ENCODE measurements at regions of chr14 and their contacts with region 1.

Region 1: DNA sequence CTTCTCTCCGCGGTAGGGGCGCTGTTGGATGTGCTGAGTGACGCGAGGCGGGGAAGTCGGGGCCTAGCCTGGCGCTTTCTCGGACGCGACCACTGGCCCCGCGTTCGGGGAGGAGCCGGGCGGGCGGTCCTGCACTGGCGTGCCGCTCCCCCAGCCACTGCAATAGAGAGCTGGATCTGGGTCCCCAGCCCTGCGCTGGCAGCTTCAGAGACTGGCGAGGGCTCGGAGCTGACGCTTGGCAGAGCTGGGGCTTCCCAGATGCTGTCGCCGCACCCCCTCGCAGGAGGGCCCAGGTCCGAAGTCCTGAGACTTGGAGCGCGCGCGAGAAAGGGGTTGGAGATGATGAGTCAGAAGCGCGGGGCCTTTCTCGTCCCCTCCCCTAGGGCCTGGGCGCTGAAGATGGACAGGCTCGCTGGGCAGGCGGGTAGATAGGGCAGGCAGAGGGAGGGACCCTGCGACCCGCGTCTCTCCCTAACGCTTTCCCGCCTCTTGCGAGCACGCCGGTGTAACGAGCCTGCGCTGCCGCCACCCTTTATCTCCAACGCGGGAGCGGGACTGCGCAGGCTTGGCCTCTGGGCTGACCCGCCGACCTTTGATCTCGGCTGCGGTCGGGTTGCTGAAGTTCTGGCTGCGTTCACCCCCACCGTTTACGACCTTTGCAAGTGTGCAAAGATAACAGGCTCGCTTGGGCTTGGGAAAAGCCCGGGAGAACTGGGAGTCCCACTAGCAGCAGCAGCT is 3.0 kb downstream of the TMEM253 start:
- DNase-seq: peak; percentile 97
- ATAC-seq: peak; percentile 86
- H3K4me3 ChIP-seq: peak overlapping the region; percentile 72 to 92 (median 84)
- H3K4me3 Mint-ChIP-seq: peak overlapping the region; percentile 78
- H3K27ac ChIP-seq: peak overlapping the region; percentile 93 to 96
- H3K27ac Mint-ChIP-seq: peak overlapping the region; percentile 96
- H3K4me1 ChIP-seq: peaks cover 17 to 25% of the 10 kb centered on the region in 2 donors
- H3K4me1 Mint-ChIP-seq: peaks cover 15% of the 10 kb centered on the region
- H3K27me3 ChIP-seq: peaks cover 0 to 25% (median 15%) of the 10 kb centered on the region in 4 experiments
- H3K27me3 Mint-ChIP-seq: peaks cover 26% of the 10 kb centered on the region
- CTCF ChIP-seq: peak; percentile 76

Region 2: GRCh38 chr14:21024585-21025370 is 79.1 kb before region 1 on chr14 and contains the start of gene NDRG2:
- CTCF ChIA-PET with region 1: interaction called, 348 read pairs
- POLR2A ChIA-PET with region 1: no interaction called
- intact Hi-C with region 1: loop called (anchors 2 kb)
- DNase-seq: peak; percentile 83
- ATAC-seq: peak; percentile 94
- H3K4me3 ChIP-seq: peak within 1 kb of the TSS; percentile 15 to 86 (median 75)
- H3K4me3 Mint-ChIP-seq: peak within 1 kb of the TSS; percentile 93
- H3K27ac ChIP-seq: no peak within 1 kb of the TSS
- H3K27ac Mint-ChIP-seq: peak within 1 kb of the TSS; percentile 67
- H3K4me1 ChIP-seq: peaks cover 12 to 23% of the 10 kb centered on the region in 2 donors
- H3K4me1 Mint-ChIP-seq: peaks cover 19% of the 10 kb centered on the region
- H3K27me3 ChIP-seq: peaks cover 0 to 30% (median 8%) of the 10 kb centered on the region in 4 experiments
- H3K27me3 Mint-ChIP-seq: peaks cover 16% of the 10 kb centered on the region
- CTCF ChIP-seq: no peak
- total RNA-seq, gene NDRG2: 9.5 and 10.2 TPM in 2 replicates

Region 3: DNA sequence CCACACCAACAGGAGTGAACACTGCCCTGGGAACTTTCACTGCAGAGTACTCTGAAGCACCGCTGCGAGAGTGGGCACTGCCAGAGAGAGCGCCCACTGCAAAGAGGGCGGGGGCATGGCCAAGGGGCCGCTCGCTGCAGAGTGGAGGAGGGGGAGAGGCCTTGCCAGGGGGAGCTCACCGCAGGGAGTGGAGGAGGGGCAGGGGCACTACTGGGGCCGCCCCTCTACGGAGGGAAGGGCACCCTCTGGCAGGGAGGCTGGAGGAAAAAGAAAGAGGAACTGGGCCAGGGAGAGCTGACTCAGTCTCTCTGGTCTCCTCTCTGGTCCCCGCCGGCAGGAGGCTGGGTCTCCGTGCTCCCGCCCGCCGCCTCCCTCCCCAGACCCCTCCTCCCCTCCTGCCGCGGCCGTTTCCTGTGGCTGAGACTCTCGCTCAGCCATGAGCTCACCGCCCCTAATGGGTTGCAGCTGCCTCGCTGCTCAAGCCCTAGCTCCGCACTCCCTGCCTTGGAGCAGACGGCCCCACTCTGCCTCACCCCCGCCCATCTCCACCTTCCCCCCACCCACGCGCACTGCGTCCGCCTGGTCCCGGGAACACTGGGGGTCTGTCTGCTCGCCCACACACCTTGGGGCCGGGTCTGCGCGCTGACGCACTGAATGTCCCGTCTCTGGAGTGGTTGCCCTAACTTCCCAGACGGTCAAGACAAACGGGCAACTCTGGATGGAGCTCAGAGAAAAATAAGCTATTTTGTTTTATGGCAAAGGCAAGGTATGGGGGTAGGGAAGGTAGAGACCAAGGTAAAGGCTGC is 32.5 kb before region 1 on chr14:
- CTCF ChIA-PET with region 1: interaction called, 276 read pairs
- POLR2A ChIA-PET with region 1: interaction called, 27 read pairs
- intact Hi-C with region 1: loop called (anchors 1 kb)
- DNase-seq: peak; percentile 79
- ATAC-seq: peak; percentile 73
- H3K4me3 ChIP-seq: peak overlapping the region; percentile 17 to 69 (median 53)
- H3K4me3 Mint-ChIP-seq: peak overlapping the region; percentile 93
- H3K27ac ChIP-seq: no peak overlapping the region
- H3K27ac Mint-ChIP-seq: peak overlapping the region; percentile 73
- H3K4me1 ChIP-seq: peaks cover 34 to 40% of the 10 kb centered on the region in 2 donors
- H3K4me1 Mint-ChIP-seq: peaks cover 44% of the 10 kb centered on the region
- H3K27me3 ChIP-seq: peaks cover 0 to 50% (median 18%) of the 10 kb centered on the region in 4 experiments
- H3K27me3 Mint-ChIP-seq: peaks cover 24% of the 10 kb centered on the region
- CTCF ChIP-seq: no peak

Region 4: DNA sequence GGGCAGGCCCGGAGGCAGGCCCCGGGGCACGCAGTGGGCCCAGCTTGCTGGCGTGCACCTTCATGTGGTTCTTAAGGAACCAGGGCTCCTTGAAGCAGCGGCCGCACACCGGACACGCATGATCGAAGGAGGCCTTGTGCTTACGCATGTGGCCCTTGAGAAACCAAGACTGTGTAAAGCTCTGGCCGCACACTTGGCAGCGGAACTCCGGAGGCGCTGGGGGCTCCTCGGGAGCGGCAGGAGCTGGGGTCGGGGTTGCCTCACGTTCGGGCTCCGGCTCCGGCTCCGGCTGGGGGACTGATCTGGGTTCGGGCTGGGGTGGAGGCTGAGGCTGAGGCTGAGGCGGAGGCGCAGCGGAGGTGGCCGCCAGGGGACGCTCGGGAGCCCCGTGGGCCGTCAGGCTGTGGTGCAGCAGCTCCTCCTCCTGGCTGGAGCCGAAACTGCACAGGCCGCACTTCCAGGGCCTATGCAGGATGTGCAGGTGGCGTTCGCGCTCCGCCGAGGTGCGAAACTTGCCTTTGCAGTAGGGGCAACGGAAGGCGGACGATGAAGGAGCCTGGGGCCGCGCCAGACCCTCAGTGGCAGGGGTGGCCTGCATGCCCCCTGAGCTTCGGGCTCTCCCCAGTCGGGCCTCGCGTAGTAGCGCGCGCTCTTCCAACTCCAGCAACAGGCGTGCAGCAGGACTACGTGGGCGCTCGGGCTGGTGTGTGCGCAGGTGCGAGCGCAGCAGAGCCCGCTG is 11.4 kb before region 1 on chr14:
- CTCF ChIA-PET with region 1: interaction called, 153 read pairs
- POLR2A ChIA-PET with region 1: interaction called, 4 read pairs
- intact Hi-C with region 1: loop called (anchors 1 kb)
- DNase-seq: peak; percentile 93
- ATAC-seq: peak; percentile 99
- H3K4me3 ChIP-seq: no peak overlapping the region
- H3K4me3 Mint-ChIP-seq: peak overlapping the region; percentile 27
- H3K27ac ChIP-seq: no peak overlapping the region
- H3K27ac Mint-ChIP-seq: peak overlapping the region; percentile 72
- H3K4me1 ChIP-seq: peaks cover 6 to 16% of the 10 kb centered on the region in 2 donors
- H3K4me1 Mint-ChIP-seq: peaks cover 14% of the 10 kb centered on the region
- H3K27me3 ChIP-seq: peaks cover 0 to 4% (median 0%) of the 10 kb centered on the region in 4 experiments
- H3K27me3 Mint-ChIP-seq: no peaks in the 10 kb centered on the region
- CTCF ChIP-seq: peak; percentile 100

Region 5: DNA sequence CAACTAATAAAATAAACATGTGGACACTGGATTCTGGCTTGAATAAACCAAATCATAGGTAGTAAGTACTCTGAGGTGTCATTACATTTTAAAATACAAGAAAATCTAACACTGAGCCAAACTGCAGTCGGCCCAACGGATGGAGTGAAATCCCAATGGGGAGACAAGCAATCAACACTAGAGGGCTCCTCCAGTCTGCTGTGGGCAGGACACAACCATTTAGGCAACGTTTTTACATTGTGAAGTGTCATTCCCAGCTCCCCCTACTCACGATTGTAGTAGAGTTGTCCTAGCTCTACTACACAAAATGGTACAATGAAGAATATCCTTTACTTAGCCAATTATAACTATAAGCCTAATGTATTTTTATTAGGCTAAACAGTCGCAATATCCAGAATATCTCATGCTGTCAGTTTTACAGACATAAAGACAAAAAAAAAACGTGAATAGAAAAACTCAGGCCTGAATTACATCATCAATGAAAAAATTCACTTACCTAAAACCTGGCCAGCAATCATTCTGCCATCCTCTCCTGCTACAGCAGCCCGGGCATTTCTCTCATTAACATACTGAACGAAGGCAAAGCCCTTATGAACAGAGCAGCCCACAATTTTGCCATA is 129.7 kb after region 1 on chr14:
- CTCF ChIA-PET with region 1: no interaction called
- POLR2A ChIA-PET with region 1: no interaction called
- intact Hi-C with region 1: no loop called
- DNase-seq: no peak
- ATAC-seq: no peak
- H3K4me3 ChIP-seq: no peak overlapping the region
- H3K4me3 Mint-ChIP-seq: no peak overlapping the region
- H3K27ac ChIP-seq: no peak overlapping the region
- H3K27ac Mint-ChIP-seq: peak overlapping the region; percentile 6
- H3K4me1 ChIP-seq: peaks cover 0 to 8% of the 10 kb centered on the region in 2 donors
- H3K4me1 Mint-ChIP-seq: peaks cover 52% of the 10 kb centered on the region
- H3K27me3 ChIP-seq: no peaks in the 10 kb centered on the region
- H3K27me3 Mint-ChIP-seq: no peaks in the 10 kb centered on the region
- CTCF ChIP-seq: no peak

Region 6: DNA sequence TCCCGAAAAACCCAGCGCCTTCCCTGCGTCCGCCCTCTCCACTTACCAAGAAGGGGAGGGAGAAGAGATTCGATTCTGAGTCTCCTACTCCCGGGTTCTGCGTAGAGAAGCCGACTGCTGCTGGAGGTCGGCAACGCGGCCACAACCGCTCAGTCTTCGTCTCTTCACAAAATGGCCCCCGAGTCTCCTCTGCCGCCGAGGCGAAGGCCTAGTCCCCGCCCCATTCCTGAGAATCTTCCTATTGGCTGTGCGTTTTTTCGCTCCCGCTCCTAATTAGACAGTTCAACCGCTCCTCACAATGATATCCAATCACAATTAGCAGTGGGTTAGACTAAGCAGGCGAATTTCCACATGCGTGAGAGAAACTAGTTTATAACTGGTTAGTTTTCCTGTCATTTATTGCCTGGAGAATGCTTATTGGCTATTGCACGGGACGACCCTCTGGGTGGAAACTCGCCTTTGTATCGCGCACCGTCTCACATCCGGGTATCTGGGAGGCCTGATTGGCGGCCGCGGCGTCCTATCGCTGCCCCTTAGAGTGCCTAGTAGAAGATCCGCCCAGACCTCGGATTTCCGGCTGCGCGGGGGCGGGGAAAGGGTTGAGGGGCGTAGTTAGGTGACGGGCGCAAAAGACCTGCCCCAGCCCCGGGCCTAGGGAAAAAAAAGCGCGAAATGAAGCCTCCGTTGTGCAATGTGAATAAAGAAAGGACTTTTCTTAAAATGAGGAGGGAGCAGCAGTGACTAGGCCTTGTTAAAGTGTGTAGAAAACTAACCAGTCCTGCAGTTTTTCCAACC is 165.6 kb after region 1 on chr14 and contains the start of gene HNRNPC:
- CTCF ChIA-PET with region 1: no interaction called
- POLR2A ChIA-PET with region 1: no interaction called
- intact Hi-C with region 1: loop called (anchors 1 kb)
- DNase-seq: peak; percentile 100
- ATAC-seq: peak; percentile 83
- H3K4me3 ChIP-seq: peak within 1 kb of the TSS; percentile 67 to 100 (median 99)
- H3K4me3 Mint-ChIP-seq: peak within 1 kb of the TSS; percentile 98
- H3K27ac ChIP-seq: peak within 1 kb of the TSS; percentile 91 to 92
- H3K27ac Mint-ChIP-seq: peak within 1 kb of the TSS; percentile 99
- H3K4me1 ChIP-seq: peaks cover 37 to 48% of the 10 kb centered on the region in 2 donors
- H3K4me1 Mint-ChIP-seq: peaks cover 40% of the 10 kb centered on the region
- H3K27me3 ChIP-seq: no peaks in the 10 kb centered on the region
- H3K27me3 Mint-ChIP-seq: no peaks in the 10 kb centered on the region
- CTCF ChIP-seq: no peak
- total RNA-seq, gene HNRNPC: 496 and 497 TPM in 2 replicates

Region 7: GRCh38 chr14:21287168-21287567 is 183.3 kb after region 1 on chr14:
- CTCF ChIA-PET with region 1: no interaction called
- POLR2A ChIA-PET with region 1: no interaction called
- intact Hi-C with region 1: no loop called
- DNase-seq: no peak
- ATAC-seq: no peak
- H3K4me3 ChIP-seq: no peak overlapping the region
- H3K4me3 Mint-ChIP-seq: no peak overlapping the region
- H3K27ac ChIP-seq: no peak overlapping the region
- H3K27ac Mint-ChIP-seq: no peak overlapping the region
- H3K4me1 ChIP-seq: peaks cover 0 to 11% of the 10 kb centered on the region in 2 donors
- H3K4me1 Mint-ChIP-seq: peaks cover 6% of the 10 kb centered on the region
- H3K27me3 ChIP-seq: no peaks in the 10 kb centered on the region
- H3K27me3 Mint-ChIP-seq: no peaks in the 10 kb centered on the region
- CTCF ChIP-seq: no peak

Region 8: GRCh38 chr14:21467616-21468015 is 363.7 kb after region 1 on chr14:
- CTCF ChIA-PET with region 1: no interaction called
- POLR2A ChIA-PET with region 1: interaction called, 10 read pairs
- intact Hi-C with region 1: no loop called
- DNase-seq: no peak
- ATAC-seq: no peak
- H3K4me3 ChIP-seq: no peak overlapping the region
- H3K4me3 Mint-ChIP-seq: no peak overlapping the region
- H3K27ac ChIP-seq: no peak overlapping the region
- H3K27ac Mint-ChIP-seq: no peak overlapping the region
- H3K4me1 ChIP-seq: no peaks in the 10 kb centered on the region
- H3K4me1 Mint-ChIP-seq: peaks cover 2% of the 10 kb centered on the region
- H3K27me3 ChIP-seq: no peaks in the 10 kb centered on the region
- H3K27me3 Mint-ChIP-seq: no peaks in the 10 kb centered on the region
- CTCF ChIP-seq: no peak

Measured in B cell (primary cell).